Mammary epithelial cell (primary cell): ENCODE measurements at regions of chr6 and their contacts with region 1.

Region 1: GRCh38 chr6:13395272-13396237 is 67.2 kb upstream of the TBC1D7 start:
- DNase-seq: no peak
- H3K4me3 ChIP-seq: no peak overlapping the region
- H3K27ac ChIP-seq: no peak overlapping the region
- H3K4me1 ChIP-seq: peaks cover 19% of the 10 kb centered on the region
- H3K27me3 ChIP-seq: no peaks in the 10 kb centered on the region
- CTCF ChIP-seq: no peak

Region 2: DNA sequence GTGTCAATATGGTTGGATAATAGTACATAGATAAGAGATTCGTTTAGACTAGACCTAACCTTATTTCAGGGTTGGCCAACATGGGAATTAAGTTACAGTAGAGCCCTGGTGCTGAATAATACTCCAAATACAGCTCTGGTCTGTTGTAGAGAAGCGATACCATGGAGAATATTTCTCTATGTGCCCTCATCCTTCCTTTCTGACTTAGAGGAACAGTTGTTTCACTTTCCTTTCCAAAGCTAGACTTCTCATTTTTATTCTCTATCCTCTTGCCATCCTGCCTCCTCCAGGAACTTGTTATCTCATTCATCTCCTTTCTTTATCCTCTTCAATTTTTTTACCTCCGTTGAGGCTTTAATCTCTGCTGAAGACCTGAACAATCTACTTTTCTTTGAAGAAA is 1036.5 kb before region 1 on chr6:
- CTCF ChIA-PET with region 1: interaction called, 12 read pairs
- dilution Hi-C with region 1: no loop called
- in situ Hi-C with region 1: no loop called
- intact Hi-C with region 1: no loop called
- DNase-seq: no peak
- H3K4me3 ChIP-seq: no peak overlapping the region
- H3K27ac ChIP-seq: no peak overlapping the region
- H3K4me1 ChIP-seq: peaks cover 23% of the 10 kb centered on the region
- H3K27me3 ChIP-seq: no peaks in the 10 kb centered on the region
- CTCF ChIP-seq: no peak

Region 3: DNA sequence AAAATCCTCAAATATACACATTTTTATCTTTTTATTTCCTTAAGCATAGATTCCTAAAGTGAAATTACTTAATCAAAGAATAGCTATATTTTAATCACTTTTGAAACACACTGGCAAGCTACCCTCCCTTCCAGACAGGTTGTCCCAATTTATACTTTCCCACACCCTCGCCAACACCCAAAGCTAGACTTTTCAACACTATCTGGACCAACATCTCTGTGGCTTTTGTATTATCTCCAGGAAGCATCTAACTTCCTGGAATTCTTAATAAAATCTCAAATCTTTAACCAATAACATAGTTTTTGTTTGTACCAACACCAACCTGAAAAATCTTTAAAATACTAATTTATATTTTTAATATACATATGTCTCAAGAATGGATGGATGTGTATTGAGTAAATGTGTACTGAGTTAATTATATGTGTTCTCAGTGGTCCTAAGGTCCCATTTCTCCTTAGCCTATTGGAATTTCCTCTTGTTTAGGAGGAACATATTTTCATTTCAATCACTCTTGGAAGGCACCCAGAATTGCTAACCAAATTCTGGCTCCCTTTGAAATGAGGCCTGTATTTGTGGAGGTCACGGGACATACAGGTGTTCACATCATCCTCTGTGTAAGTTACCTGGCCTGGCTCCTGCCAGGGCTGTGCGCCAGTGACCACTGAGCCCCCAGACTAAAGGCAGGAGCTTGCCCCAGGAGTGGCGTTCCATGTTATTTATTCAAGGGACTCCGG is 109.2 kb after region 1 on chr6:
- CTCF ChIA-PET with region 1: interaction called, 13 read pairs
- dilution Hi-C with region 1: no loop called
- in situ Hi-C with region 1: no loop called
- intact Hi-C with region 1: no loop called
- DNase-seq: no peak
- H3K4me3 ChIP-seq: no peak overlapping the region
- H3K27ac ChIP-seq: no peak overlapping the region
- H3K4me1 ChIP-seq: no peaks in the 10 kb centered on the region
- H3K27me3 ChIP-seq: no peaks in the 10 kb centered on the region
- CTCF ChIP-seq: no peak